ENCODE measurements at regions of chr15 and their contacts with region 1.

Region 1: GRCh38 chr15:39666677-39667076 is 85.8 kb downstream of the THBS1 start:
- DNase-seq: no peak
- H3K4me3 ChIP-seq: no peak overlapping the region
- H3K27ac ChIP-seq: no peak overlapping the region
- H3K4me1 ChIP-seq: peaks cover 3% of the 10 kb centered on the region
- H3K27me3 ChIP-seq: no peaks in the 10 kb centered on the region
- CTCF ChIP-seq: no peak

Region 2: GRCh38 chr15:39616731-39617455 is 49.8 kb before region 1 on chr15:
- dilution Hi-C with region 1: loop called (anchors 5 kb)
- DNase-seq: peak; percentile 58
- H3K4me3 ChIP-seq: no peak overlapping the region
- H3K27ac ChIP-seq: peak overlapping the region; percentile 56
- H3K4me1 ChIP-seq: peaks cover 29% of the 10 kb centered on the region
- H3K27me3 ChIP-seq: no peaks in the 10 kb centered on the region
- CTCF ChIP-seq: no peak

Region 3: DNA sequence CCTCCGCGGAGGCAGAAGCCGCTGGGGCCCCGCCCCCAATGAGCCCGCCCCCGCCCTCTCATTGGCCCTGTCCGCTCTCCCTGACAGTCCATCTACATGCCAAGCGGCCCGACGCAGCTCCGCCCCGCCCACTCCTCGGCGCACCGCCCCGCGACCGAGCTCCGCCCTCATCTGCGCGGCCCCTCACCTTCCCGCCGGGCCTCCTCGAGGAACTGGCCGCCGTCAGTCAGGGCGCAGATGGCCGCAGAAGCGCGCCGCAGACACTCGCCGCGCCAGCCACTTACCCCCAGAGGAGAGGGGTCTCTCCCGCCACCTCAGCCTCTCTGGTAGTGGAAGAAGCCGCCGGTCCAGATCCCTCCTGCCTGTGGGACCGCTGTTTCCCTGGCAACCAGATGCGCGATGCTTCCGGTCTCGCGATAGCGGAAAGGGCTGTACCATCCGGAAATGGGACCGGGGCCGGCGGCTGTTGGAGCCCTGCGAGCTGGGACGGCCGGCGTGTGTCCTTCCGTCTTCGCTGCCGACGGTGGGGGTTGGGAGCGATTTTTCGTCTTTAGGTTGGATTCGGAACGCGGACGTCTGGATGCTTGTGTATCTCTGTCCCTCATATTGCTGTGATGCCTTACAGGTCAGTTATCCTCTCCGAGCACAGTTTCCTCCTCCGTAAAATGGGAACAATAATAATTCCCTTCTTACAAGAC is 115.9 kb after region 1 on chr15 and contains the start of gene FSIP1:
- dilution Hi-C with region 1: no loop called
- DNase-seq: peak; percentile 58
- H3K4me3 ChIP-seq: peak within 1 kb of the TSS; percentile 73 to 86 (median 77)
- H3K27ac ChIP-seq: peak within 1 kb of the TSS; percentile 76
- H3K4me1 ChIP-seq: peaks cover 11% of the 10 kb centered on the region
- H3K27me3 ChIP-seq: no peaks in the 10 kb centered on the region
- CTCF ChIP-seq: no peak
- polyA plus RNA-seq, gene FSIP1: 1.1 to 1.5 TPM (median 1.2 TPM) in 3 replicates

Measured in keratinocyte (primary cell).